SK-N-SH (cell line): ENCODE measurements at regions of chr3 and their contacts with region 1.

Region 1: DNA sequence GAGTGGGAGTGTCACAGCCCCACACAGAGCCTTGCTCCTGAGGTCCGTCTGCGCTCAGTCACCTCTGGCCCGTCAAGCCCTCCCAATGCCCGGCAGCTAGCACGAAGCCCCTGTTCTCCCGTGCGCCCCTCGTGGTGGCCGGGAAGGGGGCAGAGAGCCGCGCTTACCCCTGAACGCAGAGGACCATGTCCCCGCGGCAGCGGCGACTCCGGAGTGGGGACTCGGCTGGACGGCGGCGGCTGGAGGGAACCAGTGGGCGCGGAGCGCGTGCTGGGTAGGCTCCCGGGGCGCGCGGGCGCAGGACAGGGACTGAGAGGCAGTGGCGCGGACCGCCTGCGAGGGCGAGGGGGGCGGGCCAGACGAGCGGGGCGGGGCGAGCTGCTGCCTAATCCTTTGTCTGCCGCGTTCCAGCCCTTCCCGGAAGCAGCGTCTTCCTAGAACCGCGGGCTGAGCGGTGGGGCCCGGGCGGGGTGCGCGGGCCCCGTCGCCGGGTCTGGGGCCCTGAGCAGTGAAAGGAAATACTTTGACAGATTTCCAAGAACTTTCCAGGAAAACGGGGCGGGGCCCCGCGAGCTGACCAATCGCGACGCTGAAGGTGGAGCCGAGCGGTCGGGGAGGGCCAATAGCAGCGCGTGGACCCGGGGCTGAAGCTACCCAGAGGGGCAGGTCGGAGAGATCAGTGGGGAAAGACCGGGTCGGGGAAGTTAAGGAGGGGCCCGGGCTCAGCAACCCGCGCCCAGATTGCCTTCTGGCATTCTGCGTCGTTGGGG is at the start of gene CISH:
- DNase-seq: peak; percentile 96
- H3K4me3 ChIP-seq: peak within 1 kb of the TSS; percentile 56 to 71
- H3K27ac ChIP-seq: peak within 1 kb of the TSS; percentile 14 to 73; a peak in 3 of 4 replicates
- H3K4me1 ChIP-seq: peaks cover 0 to 44% of the 10 kb centered on the region in 2 experiments; a peak in 1 of 4 replicates
- H3K27me3 ChIP-seq: no peaks in the 10 kb centered on the region
- CTCF ChIP-seq: peak; percentile 58
- EP300 ChIP-seq: no peak
- RAD21 ChIP-seq: no peak
- polyA plus RNA-seq, gene CISH: 2.0 and 2.6 TPM in 2 replicates

Region 2: GRCh38 chr3:50211930-50212329 is 399.7 kb before region 1 on chr3:
- CTCF ChIA-PET with region 1: no interaction called
- POLR2A ChIA-PET with region 1: no interaction called
- DNase-seq: no peak
- H3K4me3 ChIP-seq: no peak overlapping the region
- H3K27ac ChIP-seq: no peak overlapping the region
- H3K4me1 ChIP-seq: peaks cover 0 to 4% of the 10 kb centered on the region in 2 experiments; a peak in 1 of 4 replicates
- H3K27me3 ChIP-seq: no peaks in the 10 kb centered on the region
- CTCF ChIP-seq: no peak
- EP300 ChIP-seq: no peak
- RAD21 ChIP-seq: no peak

Region 3: GRCh38 chr3:50350527-50351322 is 260.9 kb before region 1 on chr3 and contains the starts of genes CYB561D2 and NPRL2:
- CTCF ChIA-PET with region 1: interaction called, 15 read pairs
- POLR2A ChIA-PET with region 1: interaction called, 5 read pairs
- DNase-seq: peak; percentile 97
- H3K4me3 ChIP-seq: peak within 1 kb of the TSS; percentile 76 to 94
- H3K27ac ChIP-seq: peak within 1 kb of the TSS; percentile 83 to 98
- H3K4me1 ChIP-seq: peaks cover 11 to 59% of the 10 kb centered on the region in 2 experiments; a peak in 2 of 4 replicates
- H3K27me3 ChIP-seq: no peaks in the 10 kb centered on the region
- CTCF ChIP-seq: no peak
- EP300 ChIP-seq: no peak
- RAD21 ChIP-seq: no peak
- polyA plus RNA-seq, gene CYB561D2: 40.7 and 46.5 TPM in 2 replicates
- polyA plus RNA-seq, gene NPRL2: 43.6 and 56.2 TPM in 2 replicates

Region 4: GRCh38 chr3:50587806-50588758 is 23.6 kb before region 1 on chr3:
- CTCF ChIA-PET with region 1: interaction called, 648 read pairs
- POLR2A ChIA-PET with region 1: interaction called, 4 read pairs
- DNase-seq: no peak
- H3K4me3 ChIP-seq: no peak overlapping the region
- H3K27ac ChIP-seq: no peak overlapping the region
- H3K4me1 ChIP-seq: peaks cover 0 to 5% of the 10 kb centered on the region in 2 experiments; a peak in 1 of 4 replicates
- H3K27me3 ChIP-seq: no peaks in the 10 kb centered on the region
- CTCF ChIP-seq: no peak
- EP300 ChIP-seq: no peak
- RAD21 ChIP-seq: no peak

Region 5: GRCh38 chr3:50639055-50639494 is 27.4 kb after region 1 on chr3:
- CTCF ChIA-PET with region 1: interaction called, 162 read pairs
- POLR2A ChIA-PET with region 1: no interaction called
- DNase-seq: no peak
- H3K4me3 ChIP-seq: no peak overlapping the region
- H3K27ac ChIP-seq: no peak overlapping the region
- H3K4me1 ChIP-seq: peaks cover 0 to 8% of the 10 kb centered on the region in 2 experiments; a peak in 1 of 4 replicates
- H3K27me3 ChIP-seq: no peaks in the 10 kb centered on the region
- CTCF ChIP-seq: no peak
- EP300 ChIP-seq: no peak
- RAD21 ChIP-seq: no peak

Region 6: GRCh38 chr3:51311055-51311454 is 699.4 kb after region 1 on chr3:
- CTCF ChIA-PET with region 1: interaction called, 23 read pairs
- POLR2A ChIA-PET with region 1: no interaction called
- DNase-seq: peak; percentile 32
- H3K4me3 ChIP-seq: no peak overlapping the region
- H3K27ac ChIP-seq: no peak overlapping the region
- H3K4me1 ChIP-seq: no peaks in the 10 kb centered on the region
- H3K27me3 ChIP-seq: no peaks in the 10 kb centered on the region
- CTCF ChIP-seq: peak; percentile 52
- EP300 ChIP-seq: no peak
- RAD21 ChIP-seq: peak; percentile 20; the same call in 1 of the 2 replicates

Region 7: DNA sequence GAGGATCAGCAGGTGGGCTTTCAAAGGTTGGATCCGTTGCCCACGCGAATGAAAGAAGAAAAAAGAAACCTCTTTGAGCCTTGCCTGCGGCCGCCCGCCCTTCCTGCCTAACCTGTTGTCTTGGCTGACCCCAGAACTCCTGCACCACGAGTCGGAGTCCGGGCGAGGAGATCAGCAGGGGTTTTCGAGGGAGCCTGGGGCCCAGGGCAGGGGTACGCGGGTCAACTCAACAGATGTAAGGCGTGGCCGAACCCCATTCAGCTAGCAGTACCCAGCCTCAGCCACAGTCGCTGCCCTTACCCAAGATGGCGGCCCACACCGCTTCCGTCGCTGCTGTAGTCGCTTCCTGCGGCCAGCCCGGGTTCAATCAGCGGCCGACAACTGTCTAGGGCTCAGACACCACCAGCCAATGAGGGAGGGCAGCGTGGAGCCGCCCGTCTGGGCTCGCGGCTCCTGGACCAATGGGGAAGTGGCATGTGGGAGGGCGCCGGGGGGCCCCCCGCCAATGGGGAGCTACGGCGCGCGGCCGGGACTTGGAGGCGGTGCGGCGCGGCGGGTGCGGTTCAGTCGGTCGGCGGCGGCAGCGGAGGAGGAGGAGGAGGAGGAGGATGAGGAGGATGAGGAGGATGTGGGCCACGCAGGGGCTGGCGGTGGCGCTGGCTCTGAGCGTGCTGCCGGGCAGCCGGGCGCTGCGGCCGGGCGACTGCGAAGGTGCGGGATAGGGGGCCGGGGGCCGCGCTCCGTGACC is 773.3 kb after region 1 on chr3 and contains the start of gene MANF:
- CTCF ChIA-PET with region 1: interaction called, 53 read pairs
- POLR2A ChIA-PET with region 1: interaction called, 8 read pairs
- DNase-seq: peak; percentile 100
- H3K4me3 ChIP-seq: peak within 1 kb of the TSS; percentile 84 to 98
- H3K27ac ChIP-seq: peak within 1 kb of the TSS; percentile 71 to 93
- H3K4me1 ChIP-seq: peaks cover 21 to 40% of the 10 kb centered on the region in 2 experiments
- H3K27me3 ChIP-seq: no peaks in the 10 kb centered on the region
- CTCF ChIP-seq: no peak
- EP300 ChIP-seq: peak in 1 of 2 experiments; percentile 9; a peak in 1 of 4 replicates
- RAD21 ChIP-seq: no peak
- polyA plus RNA-seq, gene MANF: 118 and 121 TPM in 2 replicates